Right lobe of liver (tissue), 6 donors: ENCODE measurements at regions of chr4 and their contacts with region 1.

Region 1: GRCh38 chr4:143489106-143489505 is 24.4 kb upstream of the SMARCA5 start:
- DNase-seq: peak in 1 of 3 donors; percentile 27
- ATAC-seq: peak in 2 of 4 donors; percentile 85 to 89
- H3K4me3 ChIP-seq: no peak overlapping the region
- H3K27ac ChIP-seq: no peak overlapping the region
- H3K4me1 ChIP-seq: no peaks in the 10 kb centered on the region
- H3K27me3 ChIP-seq: no peaks in the 10 kb centered on the region
- CTCF ChIP-seq: no peak
- POLR2A ChIP-seq: no peak

Region 2: DNA sequence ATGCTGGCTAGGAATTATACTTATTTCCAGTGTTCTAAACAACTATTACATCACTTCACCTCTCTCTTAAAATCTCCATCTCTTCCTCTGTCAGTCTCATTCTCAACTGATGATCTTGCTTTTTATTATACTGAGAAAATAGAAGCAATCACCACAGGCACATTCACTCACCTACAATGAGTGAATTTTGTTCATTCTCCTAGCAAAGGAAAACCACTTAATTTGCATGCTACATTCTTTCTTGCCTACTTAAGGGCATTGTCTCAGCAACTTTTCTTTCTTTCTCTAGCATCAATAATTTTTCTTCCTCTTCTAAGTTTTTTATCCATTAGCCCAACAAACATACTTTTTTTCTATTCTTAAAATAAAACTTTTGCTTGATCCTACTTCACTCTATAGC is 325.5 kb before region 1 on chr4:
- intact Hi-C with region 1: no loop called
- DNase-seq: no peak
- ATAC-seq: no peak
- H3K4me3 ChIP-seq: no peak overlapping the region
- H3K27ac ChIP-seq: no peak overlapping the region
- H3K4me1 ChIP-seq: no peaks in the 10 kb centered on the region
- H3K27me3 ChIP-seq: no peaks in the 10 kb centered on the region
- CTCF ChIP-seq: no peak
- POLR2A ChIP-seq: no peak

Region 3: GRCh38 chr4:143212566-143212965 is 276.5 kb before region 1 on chr4:
- intact Hi-C with region 1: loop called (anchors 5 to 10 kb)
- DNase-seq: no peak
- ATAC-seq: no peak
- H3K4me3 ChIP-seq: no peak overlapping the region
- H3K27ac ChIP-seq: no peak overlapping the region
- H3K4me1 ChIP-seq: no peaks in the 10 kb centered on the region
- H3K27me3 ChIP-seq: no peaks in the 10 kb centered on the region
- CTCF ChIP-seq: no peak
- POLR2A ChIP-seq: no peak

Region 4: GRCh38 chr4:143406523-143406922 is 82.6 kb before region 1 on chr4:
- intact Hi-C with region 1: no loop called
- DNase-seq: peak; percentile 58 to 79 (median 79)
- ATAC-seq: peak; percentile 85 to 93 (median 92)
- H3K4me3 ChIP-seq: no peak overlapping the region
- H3K27ac ChIP-seq: peak overlapping the region; percentile 16 to 21 (median 17)
- H3K4me1 ChIP-seq: peaks cover 0 to 31% (median 12%) of the 10 kb centered on the region in 4 donors
- H3K27me3 ChIP-seq: no peaks in the 10 kb centered on the region
- CTCF ChIP-seq: no peak
- POLR2A ChIP-seq: no peak